HepG2 (cell line): ENCODE measurements at regions of chr1 and their contacts with region 1.

Region 1: GRCh38 chr1:47913225-47913823 is 83.9 kb downstream of the TRABD2B start:
- DNase-seq: peak; percentile 98
- ATAC-seq: peak; percentile 83
- H3K4me3 ChIP-seq: peak overlapping the region; percentile 47 to 65 (median 53)
- H3K27ac ChIP-seq: peak overlapping the region; percentile 98
- H3K4me1 ChIP-seq: peaks cover 95% of the 10 kb centered on the region
- H3K27me3 ChIP-seq: no peaks in the 10 kb centered on the region
- CTCF ChIP-seq: no peak
- EP300 ChIP-seq: peak; percentile 51 to 93; a peak in 3 of 4 replicates
- POLR2A ChIP-seq: peak; percentile 75 to 88
- RAD21 ChIP-seq: peak; percentile 41; the same call in 1 of the 2 replicates

Region 2: GRCh38 chr1:47814612-47815395 is 98.5 kb before region 1 on chr1:
- CTCF ChIA-PET with region 1: no interaction called
- POLR2A ChIA-PET with region 1: interaction called, 8 read pairs
- in situ Hi-C with region 1: no loop called
- intact Hi-C with region 1: loop called (anchors 1 kb)
- DNase-seq: no peak
- ATAC-seq: no peak
- H3K4me3 ChIP-seq: no peak overlapping the region
- H3K27ac ChIP-seq: no peak overlapping the region
- H3K4me1 ChIP-seq: peaks cover 91% of the 10 kb centered on the region
- H3K27me3 ChIP-seq: no peaks in the 10 kb centered on the region; a peak in 1 of 5 replicates
- CTCF ChIP-seq: no peak
- EP300 ChIP-seq: no peak
- POLR2A ChIP-seq: no peak
- RAD21 ChIP-seq: no peak

Region 3: DNA sequence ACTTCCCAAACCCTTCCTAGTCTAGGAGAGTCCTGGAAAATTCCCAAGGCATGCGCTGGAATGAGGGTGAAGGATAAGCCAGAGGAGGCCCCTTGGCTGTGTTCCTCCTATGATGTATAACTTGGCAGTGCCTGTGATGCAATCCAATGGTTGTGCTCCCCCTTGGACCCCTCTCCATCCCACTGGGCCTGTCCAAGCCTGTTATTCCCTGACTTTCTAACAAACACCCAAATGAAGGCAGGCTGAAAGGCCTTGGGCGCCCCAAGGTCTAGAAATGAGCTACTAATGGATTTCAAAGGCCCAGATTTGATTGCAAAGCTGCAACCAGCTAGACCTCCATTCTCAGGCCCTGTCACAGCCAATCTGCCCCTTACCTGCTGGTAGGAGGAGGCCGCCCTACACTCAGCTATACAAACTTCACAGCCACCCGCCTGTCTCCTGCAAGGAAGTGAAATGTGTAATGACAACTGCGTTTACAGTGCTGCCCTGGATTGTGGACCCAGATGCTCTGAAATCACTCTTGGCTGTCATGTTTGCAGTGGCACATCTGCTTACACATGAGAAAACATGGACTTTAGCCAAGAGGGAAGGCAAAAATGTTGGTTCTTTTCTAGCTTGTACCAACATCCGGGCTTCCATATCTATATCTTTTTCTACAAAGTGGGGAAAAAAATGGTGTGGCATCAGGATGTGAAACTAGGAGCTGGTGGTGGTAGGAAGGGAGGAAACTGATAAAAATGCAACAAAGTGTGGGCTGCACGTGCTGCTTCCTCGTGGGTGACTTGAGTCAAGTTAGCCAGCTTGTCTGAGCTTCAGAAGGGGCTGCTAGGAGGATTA is 46.5 kb before region 1 on chr1:
- CTCF ChIA-PET with region 1: no interaction called
- POLR2A ChIA-PET with region 1: interaction called, 44 read pairs
- in situ Hi-C with region 1: no loop called
- intact Hi-C with region 1: loop called (anchors 1 kb)
- DNase-seq: peak; percentile 96
- ATAC-seq: peak; percentile 90
- H3K4me3 ChIP-seq: peak overlapping the region; percentile 14 to 53 (median 15); a peak in 4 of 6 replicates
- H3K27ac ChIP-seq: peak overlapping the region; percentile 97
- H3K4me1 ChIP-seq: peaks cover 83% of the 10 kb centered on the region
- H3K27me3 ChIP-seq: no peaks in the 10 kb centered on the region
- CTCF ChIP-seq: peak; percentile 33
- EP300 ChIP-seq: peak; percentile 31 to 91; a peak in 3 of 4 replicates
- POLR2A ChIP-seq: peak; percentile 53 to 65; a peak in 3 of 4 replicates
- RAD21 ChIP-seq: no peak

Region 4: DNA sequence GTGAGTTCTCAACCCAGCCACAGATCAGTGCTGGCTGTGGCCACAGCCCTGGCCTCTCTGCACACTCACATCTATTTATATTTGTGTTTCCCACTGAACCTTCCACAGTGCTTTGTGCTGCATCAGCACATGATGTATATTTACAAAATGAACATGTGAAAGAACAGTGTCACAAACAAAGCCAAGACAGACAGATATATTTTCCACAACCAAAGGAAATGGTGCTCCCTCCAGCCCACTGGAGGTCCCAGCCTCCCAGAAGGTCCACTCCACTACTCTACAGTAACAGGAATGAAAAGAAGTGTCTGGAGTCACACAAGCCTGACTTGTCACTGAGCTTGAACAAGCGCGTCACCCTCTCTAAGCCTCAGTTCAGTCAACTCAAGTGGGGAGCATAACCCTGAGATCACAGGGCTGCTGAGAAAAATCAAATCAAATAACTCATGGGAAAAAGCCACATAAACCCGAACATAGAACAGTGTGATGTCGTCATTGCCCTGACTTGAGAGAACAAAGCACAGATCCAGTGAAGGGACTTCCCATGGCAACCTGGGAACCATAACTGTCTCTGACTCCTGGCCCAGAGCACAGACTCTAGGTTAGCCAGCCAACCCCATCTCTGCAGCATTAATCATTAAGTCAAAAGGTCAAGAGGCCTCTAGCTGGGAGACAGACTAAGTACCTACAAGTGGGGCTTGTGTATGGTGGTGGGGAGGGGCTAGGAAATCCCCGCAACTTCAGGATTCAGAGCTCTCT is 37.3 kb before region 1 on chr1:
- CTCF ChIA-PET with region 1: no interaction called
- POLR2A ChIA-PET with region 1: interaction called, 20 read pairs
- in situ Hi-C with region 1: no loop called
- intact Hi-C with region 1: no loop called
- DNase-seq: peak; percentile 87
- ATAC-seq: peak; percentile 90
- H3K4me3 ChIP-seq: peak overlapping the region in 1 of 3 experiments; percentile 35; a peak in 2 of 6 replicates
- H3K27ac ChIP-seq: peak overlapping the region; percentile 82
- H3K4me1 ChIP-seq: peaks cover 60% of the 10 kb centered on the region
- H3K27me3 ChIP-seq: no peaks in the 10 kb centered on the region
- CTCF ChIP-seq: 0 out of 2 replicates have a peak, but pooled peaks have one; percentile 0
- EP300 ChIP-seq: peak in 1 of 2 experiments; percentile 45; a peak in 1 of 4 replicates
- POLR2A ChIP-seq: peak in 1 of 2 experiments; percentile 42; a peak in 1 of 4 replicates
- RAD21 ChIP-seq: no peak